Motor neuron (in vitro differentiated cells): ENCODE measurements at regions of chr5 and their contacts with region 1.

Region 1: DNA sequence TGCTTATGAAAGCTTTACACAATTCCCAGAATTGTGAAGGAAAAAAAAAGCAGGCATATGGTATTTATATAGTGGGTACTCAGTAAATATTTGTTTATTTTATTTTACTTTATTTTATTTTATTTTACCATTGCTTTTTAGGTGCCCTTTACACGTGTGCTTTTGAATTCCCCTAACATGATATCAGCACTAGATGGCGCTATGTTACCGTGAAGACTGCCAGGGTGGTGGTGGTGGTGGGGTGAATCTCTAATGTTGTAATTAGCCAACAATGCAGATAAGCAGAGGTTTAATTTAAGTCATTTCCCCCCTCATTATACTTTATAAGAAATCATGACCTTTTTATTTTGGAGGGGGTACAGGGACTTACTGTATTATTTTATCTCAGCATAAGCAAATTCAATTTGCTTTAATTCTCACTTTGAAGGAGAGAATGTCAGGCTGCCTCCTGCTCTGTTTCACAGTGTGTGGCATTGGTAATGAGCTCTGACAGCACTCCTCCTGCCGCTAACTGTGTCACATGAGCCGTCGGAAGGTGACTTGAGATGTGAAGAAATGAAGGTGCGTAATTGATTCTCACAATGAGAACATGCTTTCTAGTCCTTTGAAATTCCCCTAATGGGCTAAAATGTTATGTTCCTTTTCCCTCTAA is 165.6 kb downstream of the YTHDC2 start:
- ATAC-seq: peak; percentile 82 to 99 (median 97)
- H3K4me3 ChIP-seq: no peak overlapping the region
- H3K27ac ChIP-seq: no peak overlapping the region
- H3K4me1 ChIP-seq: peaks cover 5 to 22% of the 10 kb centered on the region in 2 donors

Region 2: DNA sequence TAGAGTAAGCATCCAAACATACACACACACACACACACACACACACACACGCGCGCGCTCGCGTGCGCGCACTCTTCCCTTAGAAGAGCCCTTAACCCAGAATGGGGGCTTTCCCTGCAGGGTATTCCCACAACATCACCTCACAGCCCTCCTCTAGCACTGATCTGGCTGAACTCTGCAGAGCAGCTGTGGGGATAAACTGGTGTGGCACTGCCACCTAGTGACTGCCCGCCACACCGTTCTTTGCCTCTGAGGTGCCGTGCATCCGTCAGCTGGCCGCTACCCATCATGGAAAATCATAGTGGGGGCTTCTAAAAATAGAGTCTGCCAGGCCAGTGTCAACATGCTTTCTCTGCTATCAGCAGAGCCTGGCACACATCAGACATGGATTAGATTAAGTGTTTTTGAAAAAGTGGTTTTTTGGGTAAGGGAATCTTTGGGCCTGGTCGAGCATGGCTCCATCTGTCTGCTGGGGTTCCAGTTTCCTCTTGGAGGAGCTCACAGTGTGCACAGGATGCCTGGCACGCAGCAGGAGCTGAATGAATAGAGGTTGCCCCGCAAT is 770.9 kb after region 1 on chr5:
- in situ Hi-C with region 1: loop called in 3 of 9 experiments (anchors 25 kb)
- ATAC-seq: peak; percentile 97 to 100 (median 100)
- H3K4me3 ChIP-seq: no peak overlapping the region
- H3K27ac ChIP-seq: no peak overlapping the region
- H3K4me1 ChIP-seq: peaks cover 0 to 9% of the 10 kb centered on the region in 2 donors